ENCODE measurements at regions of chr1 and their contacts with region 1.

Region 1: GRCh38 chr1:116794804-116795481 is 40.7 kb downstream of the CD2 start:
- H3K4me3 Mint-ChIP-seq: peak overlapping the region; percentile 34
- H3K27ac Mint-ChIP-seq: peak overlapping the region; percentile 92
- H3K4me1 Mint-ChIP-seq: peaks cover 53% of the 10 kb centered on the region
- H3K27me3 Mint-ChIP-seq: no peaks in the 10 kb centered on the region

Region 2: DNA sequence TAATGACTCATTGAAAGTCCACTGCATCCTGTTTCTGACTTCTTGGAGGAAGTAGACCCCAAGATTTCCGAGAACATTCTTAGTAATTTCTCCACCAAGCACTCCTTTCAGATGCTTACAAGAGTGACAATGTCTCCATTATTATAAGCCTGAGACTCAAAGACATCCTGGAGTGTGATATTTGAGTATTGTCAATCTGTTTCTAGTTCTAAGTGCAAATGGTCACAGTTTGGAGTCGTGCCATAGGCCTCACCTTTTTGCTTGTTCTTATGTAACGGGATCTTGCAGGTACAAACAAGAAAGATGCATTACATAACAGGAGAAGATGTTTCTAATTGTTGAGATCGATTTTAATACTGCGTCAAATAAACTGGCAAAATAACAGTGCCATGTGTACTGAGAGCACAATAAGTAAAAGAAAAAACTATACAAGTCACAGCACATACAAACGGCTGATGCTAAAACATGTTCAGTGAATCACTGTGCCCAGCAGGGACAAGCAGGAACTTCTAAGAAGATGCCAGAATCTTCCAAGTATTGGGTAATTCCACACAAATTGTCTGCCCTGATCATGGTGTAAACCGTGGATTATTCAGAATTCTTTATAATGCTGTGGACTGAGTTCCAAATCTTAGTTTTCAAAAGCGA is 13.4 kb after region 1 on chr1:
- intact Hi-C with region 1: loop called (anchors 2 kb)
- H3K4me3 Mint-ChIP-seq: no peak overlapping the region
- H3K27ac Mint-ChIP-seq: peak overlapping the region; percentile 62
- H3K4me1 Mint-ChIP-seq: peaks cover 43% of the 10 kb centered on the region
- H3K27me3 Mint-ChIP-seq: no peaks in the 10 kb centered on the region